Aorta (tissue), 5 donors: ENCODE measurements at regions of chr7 and their contacts with region 1.

Region 1: DNA sequence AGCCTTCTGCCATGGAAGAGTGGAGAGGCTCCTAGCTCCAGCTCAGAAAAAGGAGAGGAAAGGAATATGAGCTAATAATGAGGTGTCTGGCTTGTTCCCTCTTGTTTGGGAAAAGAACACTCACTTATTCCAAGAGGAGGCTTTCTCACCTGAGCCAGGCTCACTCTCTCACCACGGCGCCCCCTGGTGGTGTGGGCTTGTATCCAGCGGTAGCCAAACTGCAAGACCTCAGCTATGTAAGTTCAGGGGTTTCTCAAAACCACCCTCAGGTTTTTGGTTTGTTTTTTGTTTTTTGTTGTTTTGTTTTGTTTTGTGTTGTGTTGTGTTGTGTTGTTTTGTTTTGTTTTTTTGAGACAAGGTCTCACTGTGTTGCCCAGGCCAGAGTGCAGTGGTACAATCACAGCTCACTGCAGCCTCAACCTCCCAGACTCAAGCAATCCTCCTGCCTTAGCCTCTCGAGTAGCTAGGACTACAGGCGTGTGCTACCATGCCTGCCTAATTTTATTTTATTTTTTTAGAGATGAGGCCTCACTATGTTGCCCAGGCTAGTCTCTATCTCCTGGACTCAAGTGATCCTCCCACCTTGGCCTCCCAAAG is 124.0 kb downstream of the TMEM130 start:
- DNase-seq: peak; percentile 67 to 87
- ATAC-seq: no peak
- H3K4me3 ChIP-seq: no peak overlapping the region
- H3K27ac ChIP-seq: no peak overlapping the region
- H3K4me1 ChIP-seq: no peaks in the 10 kb centered on the region
- H3K27me3 ChIP-seq: no peaks in the 10 kb centered on the region

Region 2: GRCh38 chr7:98617051-98617959 is 128.5 kb before region 1 on chr7 and contains the start of gene NPTX2:
- intact Hi-C with region 1: loop called in 1 of 2 experiments (anchors 5 kb)
- DNase-seq: peak; percentile 71 to 93
- ATAC-seq: peak; percentile 78
- H3K4me3 ChIP-seq: peak within 1 kb of the TSS; percentile 22 to 49
- H3K27ac ChIP-seq: no peak within 1 kb of the TSS
- H3K4me1 ChIP-seq: no peaks in the 10 kb centered on the region
- H3K27me3 ChIP-seq: no peaks in the 10 kb centered on the region
- total RNA-seq, gene NPTX2: 11.5 to 35.2 TPM